AG04449 (cell line): ENCODE measurements at regions of chr17 and their contacts with region 1.

Region 1: DNA sequence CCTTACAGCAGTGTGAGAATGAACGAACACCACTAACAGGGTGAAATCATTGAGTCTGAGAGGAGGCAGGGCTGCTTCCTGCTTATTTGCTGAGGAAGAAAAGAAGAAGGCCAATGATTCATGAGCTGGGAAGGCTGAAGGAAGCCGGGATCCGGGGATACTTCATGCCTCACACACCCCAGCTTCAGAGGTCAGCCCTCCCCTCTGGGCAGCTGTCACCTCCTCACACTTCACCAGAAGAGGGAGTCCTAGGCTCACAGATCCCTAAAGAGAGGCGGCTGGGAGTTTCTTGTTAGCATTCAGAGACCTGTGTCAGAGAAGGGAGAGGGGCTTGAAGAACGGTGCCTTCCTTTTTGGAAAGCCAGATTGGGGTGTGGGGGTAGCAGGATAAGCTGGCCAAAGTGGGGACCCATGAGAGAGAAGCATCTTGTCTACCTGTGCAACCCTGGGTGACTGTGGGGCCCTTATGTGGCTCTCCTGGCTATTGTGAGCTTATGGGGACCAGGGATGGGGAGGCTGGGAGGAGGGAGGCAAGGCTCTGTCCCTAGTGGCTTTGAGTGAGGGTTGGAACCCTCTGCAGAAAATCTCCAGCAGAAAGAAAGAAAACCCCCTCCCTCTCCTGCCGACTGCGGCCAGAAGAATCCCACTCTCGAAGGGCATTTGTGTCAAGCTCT is 94.6 kb downstream of the RGS9 start:
- DNase-seq: peak; percentile 59
- H3K4me3 ChIP-seq: no peak overlapping the region
- CTCF ChIP-seq: peak; percentile 86

Region 2: DNA sequence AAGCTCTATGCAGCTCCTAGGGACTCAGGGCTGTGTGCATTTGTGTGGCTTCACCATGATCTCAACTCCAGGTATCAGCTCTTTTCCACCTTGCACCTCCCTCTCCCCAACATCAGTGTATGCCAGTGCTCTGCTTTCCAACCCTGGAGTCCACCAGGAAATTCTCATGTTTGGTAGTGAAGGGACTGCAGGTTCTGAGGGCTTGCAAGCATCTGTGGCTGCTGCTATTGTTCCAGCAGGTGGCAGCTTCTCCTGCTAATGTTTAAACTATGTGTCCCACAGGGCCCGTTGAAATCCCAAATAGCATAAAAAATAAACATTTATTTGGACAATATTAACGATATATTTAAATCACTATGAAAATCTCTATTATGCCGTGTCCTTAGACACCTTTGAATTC is 12.7 kb before region 1 on chr17:
- CTCF ChIA-PET with region 1: interaction called, 30 read pairs
- POLR2A ChIA-PET with region 1: no interaction called
- DNase-seq: no peak
- H3K4me3 ChIP-seq: no peak overlapping the region
- CTCF ChIP-seq: no peak

Region 3: DNA sequence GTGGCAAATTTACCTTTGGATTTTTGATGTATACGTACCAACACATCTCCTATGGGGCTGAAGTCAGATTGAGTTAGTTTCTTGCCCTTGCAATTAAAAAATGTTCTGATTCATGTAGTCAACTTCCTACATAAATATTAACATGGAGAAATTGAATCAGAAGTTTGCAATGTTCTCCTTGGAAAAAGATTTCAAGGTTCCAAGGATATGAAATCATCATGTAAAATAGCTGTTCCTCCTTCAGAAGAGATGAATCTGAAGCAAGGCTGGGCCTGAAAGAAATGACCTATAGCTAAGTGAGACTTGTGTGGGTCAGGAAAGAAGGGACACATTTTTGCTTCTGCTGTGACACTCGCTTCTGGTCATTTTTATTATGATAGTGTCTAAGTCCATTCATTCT is 37.0 kb after region 1 on chr17:
- CTCF ChIA-PET with region 1: interaction called, 21 read pairs
- POLR2A ChIA-PET with region 1: no interaction called
- DNase-seq: peak; percentile 46
- H3K4me3 ChIP-seq: no peak overlapping the region
- CTCF ChIP-seq: no peak

Region 4: GRCh38 chr17:65294179-65294720 is 62.5 kb after region 1 on chr17:
- CTCF ChIA-PET with region 1: interaction called, 19 read pairs
- POLR2A ChIA-PET with region 1: no interaction called
- DNase-seq: no peak
- H3K4me3 ChIP-seq: no peak overlapping the region
- CTCF ChIP-seq: peak; percentile 89

Region 5: GRCh38 chr17:65407017-65407416 is 175.2 kb after region 1 on chr17:
- CTCF ChIA-PET with region 1: no interaction called
- POLR2A ChIA-PET with region 1: no interaction called
- DNase-seq: no peak
- H3K4me3 ChIP-seq: no peak overlapping the region
- CTCF ChIP-seq: no peak

Region 6: DNA sequence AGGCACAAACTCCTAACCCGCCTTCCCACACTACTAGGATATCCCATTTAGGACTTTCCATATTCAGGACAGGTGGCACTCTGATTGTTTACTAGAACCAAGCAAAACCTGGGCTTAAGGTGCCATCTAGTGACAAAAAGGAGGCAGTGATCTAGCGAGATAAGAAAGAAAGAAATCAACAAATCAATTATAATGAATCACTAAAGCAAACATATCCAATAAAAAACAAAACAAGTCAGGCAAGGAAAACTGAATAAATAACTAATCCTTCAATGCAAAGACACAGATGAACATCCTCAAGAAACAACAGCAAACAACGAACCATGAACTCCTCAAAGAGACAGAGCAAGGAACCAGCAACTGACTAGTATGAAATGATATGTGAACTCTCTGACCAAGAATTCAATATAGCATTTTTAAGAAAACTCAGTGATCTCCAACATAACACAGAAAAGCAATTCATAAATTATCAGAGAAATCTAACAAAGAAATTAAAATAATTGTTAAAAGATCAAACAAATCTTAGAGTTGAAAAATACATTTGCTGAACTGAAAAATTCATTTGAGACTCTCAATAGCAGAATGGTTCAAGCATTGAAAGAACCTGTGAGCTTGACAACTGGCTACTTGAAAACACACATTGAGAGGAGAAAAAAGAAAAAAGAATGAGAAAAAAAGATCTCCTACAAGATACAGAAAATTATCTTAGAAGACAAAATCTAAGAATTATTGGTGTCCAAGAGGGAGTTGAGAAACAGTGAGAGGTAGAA is 756.5 kb after region 1 on chr17:
- CTCF ChIA-PET with region 1: interaction called, 19 read pairs
- POLR2A ChIA-PET with region 1: no interaction called
- DNase-seq: no peak
- H3K4me3 ChIP-seq: no peak overlapping the region
- CTCF ChIP-seq: peak; percentile 36

Region 7: GRCh38 chr17:66063686-66064085 is 831.9 kb after region 1 on chr17:
- CTCF ChIA-PET with region 1: no interaction called
- POLR2A ChIA-PET with region 1: no interaction called
- DNase-seq: no peak
- H3K4me3 ChIP-seq: no peak overlapping the region
- CTCF ChIP-seq: no peak